Gastrocnemius medialis (tissue), 4 donors: ENCODE measurements at regions of chr7 and their contacts with region 1.

Region 1: DNA sequence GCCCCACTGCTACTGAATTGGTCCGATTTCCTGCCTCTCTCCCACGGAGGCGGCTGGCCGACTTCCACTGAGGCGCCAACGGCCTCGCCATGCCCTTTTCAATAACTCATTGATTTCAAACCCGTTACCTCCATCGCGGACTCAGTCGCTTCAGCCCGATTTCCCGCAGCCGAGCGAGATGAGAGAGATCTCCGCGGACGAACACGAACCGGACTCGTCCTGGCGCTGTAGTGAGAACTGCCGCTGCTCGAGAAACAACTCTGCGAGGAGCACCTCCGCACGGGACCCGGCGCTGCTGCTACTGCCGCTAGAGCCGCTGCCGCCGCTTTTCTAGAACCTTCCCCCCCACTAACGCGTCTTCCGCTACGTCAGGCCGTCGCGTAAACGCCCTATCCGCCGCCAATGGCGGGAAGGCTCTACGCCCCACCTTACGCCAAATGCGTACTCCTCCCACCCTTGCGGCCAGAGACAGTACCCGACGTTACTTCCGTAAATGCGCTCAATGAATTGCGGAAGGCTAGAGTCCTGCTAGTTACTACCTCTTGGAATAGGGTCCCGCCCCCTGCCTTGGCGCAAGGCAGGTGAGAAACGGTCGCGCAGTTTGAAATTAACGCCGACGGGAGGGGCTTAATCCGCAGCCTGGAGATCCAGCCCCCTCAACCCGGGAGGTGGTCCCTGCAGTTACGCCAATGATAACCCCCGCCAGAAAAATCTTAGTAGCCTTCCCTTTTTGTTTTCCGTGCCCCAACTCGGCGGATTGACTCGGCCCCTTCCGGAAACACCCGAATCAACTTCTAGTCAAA is at the start of gene HNRNPA2B1:
- DNase-seq: peak; percentile 95
- ATAC-seq: peak; percentile 82 to 86
- H3K4me3 ChIP-seq: peak within 1 kb of the TSS; percentile 79 to 98 (median 94)
- H3K27ac ChIP-seq: peak within 1 kb of the TSS; percentile 97 to 100 (median 98)
- H3K4me1 ChIP-seq: peaks cover 39 to 50% of the 10 kb centered on the region in 2 donors
- H3K27me3 ChIP-seq: no peaks in the 10 kb centered on the region
- CTCF ChIP-seq: peak in 1 of 5 experiments; percentile 15
- POLR2A ChIP-seq: peak; percentile 100
- total RNA-seq, gene HNRNPA2B1: 155 to 242 (median 166) TPM

Region 2: GRCh38 chr7:25862260-25863037 is 338.2 kb before region 1 on chr7:
- in situ Hi-C with region 1: loop called in 3 of 4 experiments (anchors 10 to 25 kb)
- intact Hi-C with region 1: loop called (anchors 2 kb)
- DNase-seq: peak; percentile 98 to 100
- ATAC-seq: peak; percentile 94 to 95
- H3K4me3 ChIP-seq: peak overlapping the region; percentile 41 to 49 (median 44)
- H3K27ac ChIP-seq: peak overlapping the region; percentile 66 to 78 (median 77)
- H3K4me1 ChIP-seq: peaks cover 11 to 16% of the 10 kb centered on the region in 2 donors
- H3K27me3 ChIP-seq: peaks cover 38 to 48% (median 42%) of the 10 kb centered on the region in 3 donors
- CTCF ChIP-seq: no peak
- POLR2A ChIP-seq: peak in 1 of 2 donors; percentile 15

Region 3: DNA sequence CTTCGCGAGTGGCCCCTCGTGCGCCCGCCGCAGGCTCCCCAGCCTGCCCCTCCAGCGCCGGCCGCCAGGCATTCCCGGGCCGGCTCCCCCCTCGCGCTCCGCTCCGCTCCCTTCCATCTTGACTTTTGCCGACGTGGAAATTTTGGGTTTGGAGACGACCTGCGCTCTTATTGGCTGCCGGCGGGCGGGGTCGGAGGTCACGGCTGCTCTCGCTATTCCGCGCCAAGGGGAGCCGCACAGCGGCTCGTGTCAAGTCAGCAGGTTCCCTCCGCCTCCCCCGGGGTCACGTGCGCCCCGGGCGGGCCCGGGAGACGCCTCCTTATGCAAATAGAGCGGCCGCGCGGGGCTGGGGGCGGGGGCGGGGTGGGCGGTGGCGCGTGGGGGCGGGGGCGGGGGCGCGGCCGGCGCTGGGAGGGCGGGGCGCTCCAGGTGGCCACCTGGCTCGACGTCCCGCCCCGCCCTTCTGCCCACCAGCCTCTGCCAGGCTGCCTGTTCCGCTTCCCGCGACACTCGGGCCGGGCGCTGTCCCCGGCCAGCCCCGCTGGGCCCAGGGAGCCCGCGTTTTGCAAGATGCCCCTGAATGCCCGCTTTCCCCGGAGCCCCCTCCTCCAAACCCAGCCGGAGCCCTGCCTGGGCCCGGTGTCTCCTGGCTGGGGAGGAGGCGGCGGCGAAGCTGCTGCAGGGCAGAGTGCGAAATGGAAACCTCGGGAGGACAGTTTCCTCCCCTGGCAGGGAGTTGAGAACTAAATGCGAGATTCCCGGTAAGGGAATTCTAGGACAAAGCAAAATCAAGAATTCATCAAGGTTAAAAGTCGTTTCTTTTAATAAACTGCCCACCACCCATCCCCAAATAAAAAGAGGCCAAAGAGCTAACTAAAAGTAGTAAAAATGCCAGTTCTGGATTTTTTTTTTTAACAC is 249.4 kb before region 1 on chr7:
- in situ Hi-C with region 1: no loop called
- intact Hi-C with region 1: loop called (anchors 5 kb)
- DNase-seq: peak; percentile 82 to 86
- ATAC-seq: peak; percentile 86 to 90
- H3K4me3 ChIP-seq: peak overlapping the region; percentile 59 to 88 (median 64)
- H3K27ac ChIP-seq: peak overlapping the region; percentile 68 to 76 (median 72)
- H3K4me1 ChIP-seq: peaks cover 5 to 15% of the 10 kb centered on the region in 2 donors
- H3K27me3 ChIP-seq: no peaks in the 10 kb centered on the region
- CTCF ChIP-seq: no peak
- POLR2A ChIP-seq: peak; percentile 59 to 65

Region 4: DNA sequence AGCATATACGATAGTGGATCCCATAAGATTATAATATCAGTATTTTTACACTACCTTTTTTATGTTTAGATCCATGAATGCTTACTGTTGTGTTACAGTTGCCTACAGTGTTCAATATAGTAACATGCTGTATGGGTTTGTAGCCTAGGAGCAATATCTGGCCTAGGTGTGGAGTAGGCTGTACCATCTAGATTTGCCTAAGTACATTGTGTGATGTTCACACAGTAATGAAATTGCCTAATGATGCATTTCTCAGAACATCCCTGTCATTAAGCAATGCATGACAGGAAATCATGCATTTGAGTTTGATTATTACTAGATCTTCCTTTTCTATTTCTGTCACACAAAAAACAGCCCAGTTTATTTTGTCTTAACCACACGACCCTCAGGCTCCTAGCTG is 15.4 kb after region 1 on chr7:
- in situ Hi-C with region 1: no loop called
- intact Hi-C with region 1: no loop called
- DNase-seq: no peak
- ATAC-seq: no peak
- H3K4me3 ChIP-seq: no peak overlapping the region
- H3K27ac ChIP-seq: no peak overlapping the region
- H3K4me1 ChIP-seq: no peaks in the 10 kb centered on the region
- H3K27me3 ChIP-seq: no peaks in the 10 kb centered on the region
- CTCF ChIP-seq: no peak
- POLR2A ChIP-seq: no peak

Region 5: GRCh38 chr7:26864309-26865093 is 663.9 kb after region 1 on chr7 and contains the start of gene SKAP2:
- in situ Hi-C with region 1: loop called in 1 of 4 experiments (anchors 25 kb)
- intact Hi-C with region 1: loop called (anchors 10 kb)
- DNase-seq: peak; percentile 94 to 96
- ATAC-seq: peak; percentile 97 to 98
- H3K4me3 ChIP-seq: peak within 1 kb of the TSS; percentile 67 to 83 (median 72)
- H3K27ac ChIP-seq: peak within 1 kb of the TSS; percentile 79 to 89 (median 87)
- H3K4me1 ChIP-seq: no peaks in the 10 kb centered on the region
- H3K27me3 ChIP-seq: peaks cover 28 to 42% (median 33%) of the 10 kb centered on the region in 3 donors
- CTCF ChIP-seq: no peak
- POLR2A ChIP-seq: peak; percentile 75 to 85
- total RNA-seq, gene SKAP2: 6.1 to 23.5 (median 17.1) TPM

Region 6: DNA sequence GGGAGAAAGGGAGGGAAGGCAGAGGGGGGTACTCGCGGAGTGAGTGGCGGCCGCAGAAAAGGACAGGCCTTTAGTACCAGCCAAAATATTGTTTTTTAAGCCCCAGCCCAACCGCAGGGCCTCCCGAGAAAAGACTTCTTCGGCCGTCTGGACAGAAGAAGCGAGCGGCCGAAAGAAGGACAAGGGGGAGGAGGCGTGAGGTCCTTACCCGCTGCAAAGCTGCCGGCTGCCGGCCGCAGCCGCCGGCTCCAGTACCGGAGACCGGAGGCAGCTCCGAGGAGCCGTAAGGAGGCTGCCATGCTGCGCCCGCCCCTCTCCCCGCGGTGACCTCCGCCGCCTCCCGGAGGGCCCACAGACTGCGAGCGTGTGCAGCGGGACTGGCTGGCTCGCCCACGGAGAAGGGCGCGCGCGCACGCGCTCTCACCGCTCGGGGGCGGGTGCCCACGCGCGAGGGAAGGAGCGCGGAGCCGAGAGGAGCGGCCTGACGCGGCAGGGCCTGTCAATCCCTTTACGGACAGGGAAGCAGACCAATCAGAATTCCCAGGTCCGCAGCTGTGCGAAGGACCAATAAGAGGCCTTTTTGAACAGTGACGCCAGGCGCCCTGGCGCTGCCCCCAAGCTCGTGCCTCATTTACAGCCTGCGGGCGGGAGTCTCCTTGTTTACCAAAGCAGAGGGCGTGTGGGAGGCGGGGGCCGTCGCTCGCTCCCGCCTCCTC is 1462.0 kb after region 1 on chr7 and contains the start of gene HIBADH:
- in situ Hi-C with region 1: no loop called
- intact Hi-C with region 1: loop called (anchors 5 kb)
- DNase-seq: peak; percentile 99 to 100
- ATAC-seq: peak; percentile 96 to 98
- H3K4me3 ChIP-seq: peak within 1 kb of the TSS; percentile 73 to 99 (median 92)
- H3K27ac ChIP-seq: peak within 1 kb of the TSS; percentile 95 to 100 (median 97)
- H3K4me1 ChIP-seq: peaks cover 10 to 14% of the 10 kb centered on the region in 2 donors
- H3K27me3 ChIP-seq: no peaks in the 10 kb centered on the region
- CTCF ChIP-seq: peak; percentile 12 to 46 (median 29)
- POLR2A ChIP-seq: peak; percentile 96 to 99
- total RNA-seq, gene HIBADH: 42.2 to 56.4 (median 49.0) TPM